SK-N-SH (cell line): ENCODE measurements at regions of chr21 and their contacts with region 1.

Region 1: GRCh38 chr21:43975495-43975993 is 36.6 kb upstream of the TRAPPC10 start:
- DNase-seq: peak; percentile 91
- H3K4me3 ChIP-seq: no peak overlapping the region; a peak in 1 of 4 replicates
- H3K27ac ChIP-seq: no peak overlapping the region
- H3K4me1 ChIP-seq: no peaks in the 10 kb centered on the region; a peak in 1 of 4 replicates
- H3K27me3 ChIP-seq: no peaks in the 10 kb centered on the region
- CTCF ChIP-seq: peak; percentile 93
- EP300 ChIP-seq: no peak
- RAD21 ChIP-seq: peak; percentile 86

Region 2: DNA sequence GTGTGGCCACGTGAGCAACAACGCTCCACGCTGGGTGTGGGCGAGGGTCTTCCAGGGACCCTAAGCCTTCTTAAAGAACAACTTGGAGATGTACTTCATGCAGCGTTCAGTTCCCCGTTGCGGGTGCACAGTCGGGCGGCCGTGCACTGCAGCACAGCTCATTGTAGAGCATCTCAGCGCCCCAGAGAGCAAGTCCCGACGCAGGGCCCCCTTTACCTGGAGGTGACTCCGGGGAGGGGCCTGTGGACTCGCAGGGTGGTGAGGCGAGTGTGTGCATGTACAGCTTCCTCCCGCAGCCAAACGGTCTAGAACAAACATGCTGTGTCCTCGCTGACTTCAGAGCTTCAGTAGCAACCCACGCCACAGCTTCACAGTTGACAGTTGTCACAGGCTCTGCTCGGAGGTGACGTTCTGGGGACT is 166.7 kb before region 1 on chr21:
- CTCF ChIA-PET with region 1: interaction called, 20 read pairs
- POLR2A ChIA-PET with region 1: no interaction called
- DNase-seq: no peak
- H3K4me3 ChIP-seq: no peak overlapping the region
- H3K27ac ChIP-seq: no peak overlapping the region
- H3K4me1 ChIP-seq: peaks cover 0 to 6% of the 10 kb centered on the region in 2 experiments; a peak in 1 of 4 replicates
- H3K27me3 ChIP-seq: no peaks in the 10 kb centered on the region
- CTCF ChIP-seq: no peak
- EP300 ChIP-seq: no peak
- RAD21 ChIP-seq: no peak

Region 3: GRCh38 chr21:43829575-43830119 is 145.9 kb before region 1 on chr21:
- CTCF ChIA-PET with region 1: interaction called, 10 read pairs
- POLR2A ChIA-PET with region 1: no interaction called
- DNase-seq: peak; percentile 44
- H3K4me3 ChIP-seq: no peak overlapping the region
- H3K27ac ChIP-seq: no peak overlapping the region
- H3K4me1 ChIP-seq: no peaks in the 10 kb centered on the region; a peak in 1 of 4 replicates
- H3K27me3 ChIP-seq: no peaks in the 10 kb centered on the region; the same call in 1 of the 2 replicates
- CTCF ChIP-seq: peak; percentile 29; the same call in 1 of the 2 replicates
- EP300 ChIP-seq: no peak
- RAD21 ChIP-seq: peak; percentile 28

Region 4: GRCh38 chr21:43868461-43868860 is 107.1 kb before region 1 on chr21:
- CTCF ChIA-PET with region 1: interaction called, 13 read pairs
- POLR2A ChIA-PET with region 1: no interaction called
- DNase-seq: no peak
- H3K4me3 ChIP-seq: no peak overlapping the region
- H3K27ac ChIP-seq: no peak overlapping the region; a peak in 1 of 4 replicates
- H3K4me1 ChIP-seq: peaks cover 8 to 14% of the 10 kb centered on the region in 2 experiments; a peak in 2 of 4 replicates
- H3K27me3 ChIP-seq: no peaks in the 10 kb centered on the region
- CTCF ChIP-seq: no peak
- EP300 ChIP-seq: no peak
- RAD21 ChIP-seq: no peak

Region 5: GRCh38 chr21:43985690-43986251 is 10.2 kb after region 1 on chr21:
- CTCF ChIA-PET with region 1: no interaction called
- POLR2A ChIA-PET with region 1: no interaction called
- DNase-seq: peak; percentile 53
- H3K4me3 ChIP-seq: no peak overlapping the region
- H3K27ac ChIP-seq: no peak overlapping the region
- H3K4me1 ChIP-seq: no peaks in the 10 kb centered on the region
- H3K27me3 ChIP-seq: no peaks in the 10 kb centered on the region
- CTCF ChIP-seq: no peak
- EP300 ChIP-seq: no peak
- RAD21 ChIP-seq: no peak

Region 6: DNA sequence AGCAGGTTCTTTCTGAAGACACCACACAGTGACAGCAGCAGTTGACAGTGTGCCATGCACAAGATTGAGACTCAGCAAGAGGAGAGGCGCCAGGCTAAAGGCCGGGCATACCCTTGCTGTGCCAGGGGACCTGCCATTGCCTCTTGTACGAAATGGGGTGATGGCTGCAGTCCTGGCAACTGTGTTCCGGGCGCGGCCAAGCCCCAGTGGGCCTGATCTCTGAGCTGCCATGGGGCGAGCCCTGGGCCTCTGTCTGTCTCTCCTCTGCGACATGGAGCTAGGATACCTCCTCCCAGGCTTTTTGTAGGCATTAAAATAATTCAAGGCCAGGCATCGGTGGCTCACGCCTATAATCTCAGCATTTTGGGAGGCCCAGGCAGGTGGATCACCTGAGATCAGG is 27.0 kb after region 1 on chr21:
- CTCF ChIA-PET with region 1: interaction called, 11 read pairs
- POLR2A ChIA-PET with region 1: no interaction called
- DNase-seq: no peak
- H3K4me3 ChIP-seq: no peak overlapping the region
- H3K27ac ChIP-seq: no peak overlapping the region
- H3K4me1 ChIP-seq: peaks cover 2 to 10% of the 10 kb centered on the region in 2 experiments; a peak in 3 of 4 replicates
- H3K27me3 ChIP-seq: no peaks in the 10 kb centered on the region
- CTCF ChIP-seq: no peak
- EP300 ChIP-seq: no peak
- RAD21 ChIP-seq: no peak